Activated CD4-positive, alpha-beta T cell treated with anti-CD3 and anti-CD28 coated beads for 36 hours (primary cell): ENCODE measurements at regions of chr1 and their contacts with region 1.

Region 1: GRCh38 chr1:223611936-223612335 is 53.6 kb downstream of the CAPN8 start:
- DNase-seq: no peak
- ATAC-seq: no peak
- H3K4me3 Mint-ChIP-seq: no peak overlapping the region
- H3K27ac Mint-ChIP-seq: no peak overlapping the region
- H3K4me1 Mint-ChIP-seq: no peaks in the 10 kb centered on the region
- H3K27me3 Mint-ChIP-seq: no peaks in the 10 kb centered on the region

Region 2: GRCh38 chr1:223556414-223557129 is 55.4 kb before region 1 on chr1:
- CTCF ChIA-PET with region 1: interaction called, 39 read pairs
- POLR2A ChIA-PET with region 1: no interaction called
- intact Hi-C with region 1: no loop called
- DNase-seq: peak; percentile 81
- ATAC-seq: peak; percentile 70
- H3K4me3 Mint-ChIP-seq: no peak overlapping the region
- H3K27ac Mint-ChIP-seq: no peak overlapping the region
- H3K4me1 Mint-ChIP-seq: no peaks in the 10 kb centered on the region
- H3K27me3 Mint-ChIP-seq: no peaks in the 10 kb centered on the region

Region 3: GRCh38 chr1:223652436-223652941 is 40.6 kb after region 1 on chr1:
- CTCF ChIA-PET with region 1: no interaction called
- POLR2A ChIA-PET with region 1: no interaction called
- intact Hi-C with region 1: no loop called
- DNase-seq: no peak
- ATAC-seq: peak; percentile 9
- H3K4me3 Mint-ChIP-seq: no peak overlapping the region
- H3K27ac Mint-ChIP-seq: no peak overlapping the region
- H3K4me1 Mint-ChIP-seq: peaks cover 5% of the 10 kb centered on the region
- H3K27me3 Mint-ChIP-seq: peaks cover 9% of the 10 kb centered on the region